ENCODE measurements at regions of chr5 and their contacts with region 1.

Region 1: GRCh38 chr5:129767906-129768380 is 20.0 kb downstream of the MINAR2 start:
- DNase-seq: peak; percentile 50 to 64 (median 57)
- H3K4me3 ChIP-seq: no peak overlapping the region
- H3K4me3 Mint-ChIP-seq: no peak overlapping the region
- H3K27ac ChIP-seq: no peak overlapping the region
- H3K27ac Mint-ChIP-seq: no peak overlapping the region
- H3K4me1 ChIP-seq: peaks cover 4% of the 10 kb centered on the region
- H3K4me1 Mint-ChIP-seq: peaks cover 0 to 2% (median 0%) of the 10 kb centered on the region in 4 donors
- H3K27me3 ChIP-seq: no peaks in the 10 kb centered on the region
- H3K27me3 Mint-ChIP-seq: peaks cover 0 to 2% of the 10 kb centered on the region in 2 donors

Region 2: DNA sequence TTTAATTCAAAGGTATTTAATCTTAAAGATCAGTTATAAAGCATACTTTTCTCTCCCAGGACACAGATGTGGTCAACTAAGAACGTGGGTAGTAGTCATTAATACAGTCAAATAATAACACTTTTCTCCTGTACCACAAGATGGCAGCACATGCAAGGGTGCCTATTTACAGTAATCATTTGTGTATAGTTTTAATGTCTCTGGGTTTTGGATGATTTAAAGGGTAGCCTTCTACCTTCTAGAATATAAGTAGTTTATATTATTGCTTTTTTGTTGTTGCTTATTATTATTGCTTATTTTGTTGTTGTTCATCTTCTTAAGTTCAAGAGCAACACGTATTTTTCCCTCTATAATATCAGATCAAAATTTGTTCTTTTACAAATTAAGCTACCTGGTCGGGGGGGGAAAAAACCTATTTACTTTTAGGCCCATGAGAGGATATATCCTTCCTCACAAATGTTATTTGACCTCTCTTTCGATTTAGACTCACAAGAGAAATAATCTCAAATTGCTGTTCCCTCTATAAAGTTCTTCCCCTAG is 862.3 kb before region 1 on chr5:
- CTCF ChIA-PET with region 1: interaction called, 28 read pairs
- POLR2A ChIA-PET with region 1: no interaction called
- intact Hi-C with region 1: loop called (anchors 1 kb)
- DNase-seq: peak; percentile 36 to 49 (median 43)
- H3K4me3 ChIP-seq: no peak overlapping the region
- H3K4me3 Mint-ChIP-seq: no peak overlapping the region
- H3K27ac ChIP-seq: no peak overlapping the region
- H3K27ac Mint-ChIP-seq: no peak overlapping the region
- H3K4me1 ChIP-seq: no peaks in the 10 kb centered on the region
- H3K4me1 Mint-ChIP-seq: no peaks in the 10 kb centered on the region
- H3K27me3 ChIP-seq: no peaks in the 10 kb centered on the region
- H3K27me3 Mint-ChIP-seq: no peaks in the 10 kb centered on the region

Region 3: DNA sequence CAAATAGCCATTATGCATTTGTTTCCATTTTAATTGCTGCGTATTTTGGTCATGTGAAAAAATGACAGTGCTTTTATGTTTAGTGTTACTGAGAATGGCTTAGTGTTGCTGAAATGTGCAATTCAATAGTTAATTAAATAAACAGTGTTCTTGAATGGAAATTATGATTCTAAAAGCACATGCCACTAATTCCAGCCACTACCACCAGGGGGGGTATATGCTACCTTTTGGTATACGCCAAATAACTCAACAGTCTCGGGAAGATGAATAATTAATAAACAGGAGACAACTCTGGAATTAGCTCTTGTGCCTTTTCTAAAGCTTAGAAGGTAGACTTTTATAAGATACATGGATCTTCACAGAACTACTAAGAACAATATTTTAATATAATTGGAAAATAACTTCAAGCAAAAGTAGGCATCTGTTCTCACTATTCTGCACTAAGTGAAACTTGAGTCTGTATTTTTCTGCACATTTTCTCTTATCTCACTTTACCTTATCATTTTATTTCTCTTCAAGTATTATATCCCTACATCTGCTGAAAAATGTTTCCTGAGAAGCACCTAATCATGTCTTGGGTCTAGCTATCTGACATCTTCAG is 103.5 kb before region 1 on chr5:
- CTCF ChIA-PET with region 1: interaction called, 5 read pairs
- POLR2A ChIA-PET with region 1: no interaction called
- intact Hi-C with region 1: loop called (anchors 1 kb)
- DNase-seq: peak in 3 of 5 donors; percentile 15 to 37 (median 19)
- H3K4me3 ChIP-seq: no peak overlapping the region
- H3K4me3 Mint-ChIP-seq: no peak overlapping the region
- H3K27ac ChIP-seq: no peak overlapping the region
- H3K27ac Mint-ChIP-seq: no peak overlapping the region
- H3K4me1 ChIP-seq: no peaks in the 10 kb centered on the region
- H3K4me1 Mint-ChIP-seq: no peaks in the 10 kb centered on the region
- H3K27me3 ChIP-seq: no peaks in the 10 kb centered on the region
- H3K27me3 Mint-ChIP-seq: no peaks in the 10 kb centered on the region

Region 4: DNA sequence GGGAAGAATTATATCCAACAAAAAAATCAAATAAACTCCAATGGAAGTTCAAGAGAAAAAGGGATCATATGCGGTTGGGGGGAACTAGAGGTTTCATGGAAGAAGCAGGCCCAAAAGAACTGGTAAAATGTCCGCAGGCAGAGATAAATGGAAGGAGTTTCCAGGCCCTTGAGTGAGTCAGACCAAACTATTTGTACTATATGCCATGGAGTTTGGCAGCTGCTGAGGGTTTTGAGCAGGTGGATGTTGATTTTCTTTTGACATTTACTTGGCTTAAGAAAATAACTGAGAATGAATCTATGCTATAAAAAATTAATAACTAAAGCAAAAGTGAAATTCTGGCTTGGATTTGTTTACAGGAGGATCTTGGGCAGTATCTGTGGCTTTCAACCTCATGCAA is 13.7 kb after region 1 on chr5:
- CTCF ChIA-PET with region 1: interaction called, 11 read pairs
- POLR2A ChIA-PET with region 1: no interaction called
- intact Hi-C with region 1: no loop called
- DNase-seq: no peak
- H3K4me3 ChIP-seq: no peak overlapping the region
- H3K4me3 Mint-ChIP-seq: peak overlapping the region in 1 of 8 donors; percentile 28
- H3K27ac ChIP-seq: no peak overlapping the region
- H3K27ac Mint-ChIP-seq: no peak overlapping the region
- H3K4me1 ChIP-seq: no peaks in the 10 kb centered on the region
- H3K4me1 Mint-ChIP-seq: no peaks in the 10 kb centered on the region
- H3K27me3 ChIP-seq: no peaks in the 10 kb centered on the region
- H3K27me3 Mint-ChIP-seq: peaks cover 2 to 6% of the 10 kb centered on the region in 2 donors

Region 5: GRCh38 chr5:129852747-129853352 is 84.9 kb after region 1 on chr5:
- CTCF ChIA-PET with region 1: interaction called, 13 read pairs
- POLR2A ChIA-PET with region 1: no interaction called
- intact Hi-C with region 1: loop called (anchors 1 kb)
- DNase-seq: peak; percentile 34 to 45 (median 43)
- H3K4me3 ChIP-seq: no peak overlapping the region
- H3K4me3 Mint-ChIP-seq: no peak overlapping the region
- H3K27ac ChIP-seq: no peak overlapping the region
- H3K27ac Mint-ChIP-seq: no peak overlapping the region
- H3K4me1 ChIP-seq: no peaks in the 10 kb centered on the region
- H3K4me1 Mint-ChIP-seq: peaks cover 0 to 1% (median 0%) of the 10 kb centered on the region in 4 donors
- H3K27me3 ChIP-seq: no peaks in the 10 kb centered on the region
- H3K27me3 Mint-ChIP-seq: peaks cover under 1 to 3% of the 10 kb centered on the region in 2 donors

Region 6: DNA sequence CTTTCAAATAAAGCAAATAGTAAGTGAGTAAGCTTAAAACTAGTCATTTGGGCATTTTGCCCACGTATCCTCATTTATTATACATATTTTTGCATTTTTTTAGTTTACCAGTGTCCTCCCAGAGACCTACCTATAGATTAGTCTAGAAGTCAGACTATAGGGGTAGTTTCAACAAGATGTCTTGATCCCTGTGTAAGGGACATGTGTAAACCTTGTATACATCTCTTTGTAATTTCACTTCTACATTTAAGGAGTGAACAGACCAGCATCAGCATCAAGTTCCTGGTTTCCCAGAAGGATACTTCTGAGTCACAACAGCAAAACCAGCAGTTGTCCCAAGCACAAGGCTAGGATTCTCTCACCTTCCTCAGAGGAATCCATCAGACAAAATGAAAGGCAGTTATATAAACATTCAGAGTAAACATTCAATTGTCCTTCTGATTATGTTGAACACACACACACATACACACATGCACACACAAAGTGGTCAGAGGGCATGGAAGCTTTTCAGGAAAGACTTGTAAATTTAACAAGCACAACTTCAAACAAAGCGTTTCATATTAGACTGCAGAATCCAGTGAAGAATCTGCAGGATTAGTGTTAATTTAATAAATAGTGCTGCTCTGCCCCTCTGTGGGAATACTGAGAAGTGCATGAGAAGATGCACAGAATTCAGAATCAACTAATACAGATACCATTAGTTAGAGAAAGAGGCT is 1341.8 kb after region 1 on chr5:
- CTCF ChIA-PET with region 1: interaction called, 20 read pairs
- POLR2A ChIA-PET with region 1: no interaction called
- intact Hi-C with region 1: no loop called
- DNase-seq: peak in 4 of 5 donors; percentile 41 to 58 (median 54)
- H3K4me3 ChIP-seq: no peak overlapping the region
- H3K4me3 Mint-ChIP-seq: no peak overlapping the region
- H3K27ac ChIP-seq: no peak overlapping the region
- H3K27ac Mint-ChIP-seq: no peak overlapping the region
- H3K4me1 ChIP-seq: peaks cover 5% of the 10 kb centered on the region
- H3K4me1 Mint-ChIP-seq: peaks cover 0 to 4% (median 4%) of the 10 kb centered on the region in 4 donors
- H3K27me3 ChIP-seq: no peaks in the 10 kb centered on the region
- H3K27me3 Mint-ChIP-seq: peaks cover 0 to 2% of the 10 kb centered on the region in 2 donors